ENCODE measurements at regions of chr5 and their contacts with region 1.

Region 1: DNA sequence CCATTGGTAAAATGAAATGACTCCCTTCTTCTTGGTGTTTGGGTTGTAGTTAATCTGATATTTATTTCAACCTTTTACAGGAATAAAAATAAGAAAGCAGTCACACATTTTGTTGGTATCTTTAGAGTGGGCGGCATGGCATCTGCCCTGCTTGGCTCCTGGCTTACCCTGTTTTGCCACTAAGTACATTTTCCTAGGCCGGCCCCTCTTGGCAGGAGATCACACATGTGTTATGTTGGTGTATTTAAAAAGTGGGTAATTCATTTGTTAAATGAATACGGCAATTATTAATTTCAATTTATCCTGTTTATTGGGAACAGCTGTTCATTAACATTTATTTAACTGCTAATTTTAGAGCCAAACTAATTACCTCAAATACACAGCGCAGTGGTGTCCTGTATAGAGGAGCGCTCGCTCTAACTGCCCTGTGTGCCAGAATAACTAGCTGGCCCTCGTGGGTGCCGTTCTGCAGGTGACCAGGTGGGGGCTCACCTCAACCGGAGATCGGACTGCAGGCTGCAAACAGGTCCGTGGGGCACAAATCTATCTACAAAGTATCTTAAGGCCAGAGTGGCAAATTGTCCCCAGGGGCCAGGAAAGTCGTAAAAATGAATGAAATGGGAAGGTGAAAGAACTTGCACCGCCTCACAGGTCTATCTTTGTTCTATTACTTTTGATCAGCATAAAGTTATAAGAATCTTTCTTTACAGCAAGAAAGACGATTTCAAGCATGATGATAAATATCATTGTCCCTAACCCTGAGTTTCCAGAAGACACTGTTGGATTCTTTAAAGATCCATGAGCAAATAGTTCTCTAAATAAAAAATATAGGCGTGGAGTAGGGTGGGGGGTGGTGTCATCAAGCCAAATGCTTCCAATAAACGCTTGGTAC is 26.2 kb upstream of the GPR151 start:
- DNase-seq: peak; percentile 75
- ATAC-seq: peak; percentile 79

Region 2: DNA sequence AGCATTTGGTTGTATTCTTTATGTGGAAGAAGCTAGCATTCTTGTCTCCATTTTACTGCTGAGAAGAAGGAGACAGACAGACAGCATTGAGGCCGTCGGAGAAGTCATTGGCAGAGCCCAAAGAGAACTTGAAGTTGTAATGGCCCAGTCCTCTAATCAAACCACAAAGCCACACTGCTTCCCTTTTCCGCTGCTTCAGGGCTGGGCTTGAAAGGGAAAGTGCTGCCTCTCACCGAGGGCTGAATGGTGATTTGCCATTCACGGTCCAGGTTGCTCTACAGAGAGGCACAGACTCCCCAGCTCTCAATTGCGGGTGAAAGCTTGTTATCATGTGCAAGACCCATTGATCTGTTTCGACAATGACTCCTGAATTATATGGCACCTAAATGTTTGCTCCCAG is 229.2 kb before region 1 on chr5:
- intact Hi-C with region 1: no loop called
- DNase-seq: no peak
- ATAC-seq: no peak

Region 3: GRCh38 chr5:146345578-146346366 is 196.4 kb before region 1 on chr5:
- intact Hi-C with region 1: no loop called
- DNase-seq: no peak
- ATAC-seq: no peak

Region 4: GRCh38 chr5:146965761-146966659 is 423.8 kb after region 1 on chr5:
- intact Hi-C with region 1: loop called (anchors 1 kb)
- DNase-seq: peak; percentile 32
- ATAC-seq: peak; percentile 89

Region 5: GRCh38 chr5:147188200-147189108 is 646.2 kb after region 1 on chr5:
- intact Hi-C with region 1: loop called (anchors 5 kb)
- DNase-seq: no peak
- ATAC-seq: no peak

Measured in Right ventricle myocardium inferior (tissue), 1 donor.